Psoas muscle (tissue), 8 donors: ENCODE measurements at regions of chr11 and their contacts with region 1.

Region 1: GRCh38 chr11:130732476-130732875 is 183.8 kb downstream of the SNX19 start:
- DNase-seq: no peak
- ATAC-seq: no peak
- H3K4me3 ChIP-seq: no peak overlapping the region
- H3K27ac ChIP-seq: no peak overlapping the region
- H3K4me1 ChIP-seq: no peaks in the 10 kb centered on the region
- H3K27me3 ChIP-seq: no peaks in the 10 kb centered on the region
- CTCF ChIP-seq: no peak

Region 2: GRCh38 chr11:130706572-130706971 is 25.9 kb before region 1 on chr11:
- intact Hi-C with region 1: loop called in 1 of 2 experiments (anchors 1 kb)
- DNase-seq: no peak
- ATAC-seq: peak in 1 of 4 donors; percentile 24
- H3K4me3 ChIP-seq: no peak overlapping the region
- H3K27ac ChIP-seq: no peak overlapping the region
- H3K4me1 ChIP-seq: no peaks in the 10 kb centered on the region
- H3K27me3 ChIP-seq: no peaks in the 10 kb centered on the region
- CTCF ChIP-seq: no peak